MCF 10A (cell line): ENCODE measurements at regions of chr11 and their contacts with region 1.

Region 1: GRCh38 chr11:83071567-83072349 is at the start of gene RAB30:
- DNase-seq: peak; percentile 100
- H3K4me3 Mint-ChIP-seq: no peak within 1 kb of the TSS
- H3K27ac Mint-ChIP-seq: no peak within 1 kb of the TSS
- H3K4me1 Mint-ChIP-seq: peaks cover 26% of the 10 kb centered on the region
- H3K27me3 Mint-ChIP-seq: no peaks in the 10 kb centered on the region
- CTCF ChIP-seq: no peak
- total RNA-seq, gene RAB30: 12.5 and 13.2 TPM in 2 replicates

Region 2: GRCh38 chr11:82906244-82906654 is 165.5 kb before region 1 on chr11:
- CTCF ChIA-PET with region 1: interaction called, 4 read pairs
- POLR2A ChIA-PET with region 1: interaction called, 46 read pairs
- intact Hi-C with region 1: loop called (anchors 1 kb)
- DNase-seq: peak; percentile 40
- H3K4me3 Mint-ChIP-seq: peak overlapping the region; percentile 37
- H3K27ac Mint-ChIP-seq: peak overlapping the region; percentile 40
- H3K4me1 Mint-ChIP-seq: peaks cover 34% of the 10 kb centered on the region
- H3K27me3 Mint-ChIP-seq: no peaks in the 10 kb centered on the region
- CTCF ChIP-seq: peak; percentile 46

Region 3: DNA sequence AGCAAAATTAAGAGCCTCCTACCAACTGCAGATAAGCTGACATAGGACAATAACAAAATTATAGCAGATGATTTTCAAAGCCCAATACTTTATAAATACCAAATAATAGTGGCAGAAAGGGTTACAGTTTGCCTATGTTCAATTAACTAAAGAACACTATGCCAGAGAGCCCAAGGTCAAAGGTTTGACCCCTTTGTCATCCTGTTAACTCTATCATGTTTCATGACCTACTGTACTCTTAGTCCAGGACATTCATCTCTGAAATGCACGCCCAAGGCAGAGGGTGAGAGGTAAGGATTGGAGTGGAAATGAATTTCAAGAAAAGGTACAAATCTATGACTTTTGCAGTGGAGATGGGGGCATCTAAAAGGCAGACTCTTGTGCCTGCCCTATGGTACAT is 99.7 kb before region 1 on chr11:
- CTCF ChIA-PET with region 1: no interaction called
- POLR2A ChIA-PET with region 1: no interaction called
- intact Hi-C with region 1: no loop called
- DNase-seq: no peak
- H3K4me3 Mint-ChIP-seq: no peak overlapping the region
- H3K27ac Mint-ChIP-seq: no peak overlapping the region
- H3K4me1 Mint-ChIP-seq: peaks cover 11% of the 10 kb centered on the region
- H3K27me3 Mint-ChIP-seq: no peaks in the 10 kb centered on the region
- CTCF ChIP-seq: no peak

Region 4: GRCh38 chr11:83019888-83020579 is 51.7 kb before region 1 on chr11:
- CTCF ChIA-PET with region 1: interaction called, 6 read pairs
- POLR2A ChIA-PET with region 1: interaction called, 41 read pairs
- intact Hi-C with region 1: no loop called
- DNase-seq: peak; percentile 29
- H3K4me3 Mint-ChIP-seq: no peak overlapping the region
- H3K27ac Mint-ChIP-seq: peak overlapping the region; percentile 61
- H3K4me1 Mint-ChIP-seq: peaks cover 19% of the 10 kb centered on the region
- H3K27me3 Mint-ChIP-seq: no peaks in the 10 kb centered on the region
- CTCF ChIP-seq: no peak

Region 5: GRCh38 chr11:83044958-83045712 is 26.6 kb before region 1 on chr11:
- CTCF ChIA-PET with region 1: interaction called, 4 read pairs
- POLR2A ChIA-PET with region 1: interaction called, 134 read pairs
- intact Hi-C with region 1: no loop called
- DNase-seq: peak; percentile 85
- H3K4me3 Mint-ChIP-seq: no peak overlapping the region
- H3K27ac Mint-ChIP-seq: peak overlapping the region; percentile 69
- H3K4me1 Mint-ChIP-seq: peaks cover 34% of the 10 kb centered on the region
- H3K27me3 Mint-ChIP-seq: no peaks in the 10 kb centered on the region
- CTCF ChIP-seq: no peak

Region 6: GRCh38 chr11:83092488-83093384 is 21.0 kb after region 1 on chr11:
- CTCF ChIA-PET with region 1: interaction called, 6 read pairs
- POLR2A ChIA-PET with region 1: interaction called, 28 read pairs
- intact Hi-C with region 1: no loop called
- DNase-seq: peak; percentile 64
- H3K4me3 Mint-ChIP-seq: no peak overlapping the region
- H3K27ac Mint-ChIP-seq: peak overlapping the region; percentile 84
- H3K4me1 Mint-ChIP-seq: peaks cover 9% of the 10 kb centered on the region
- H3K27me3 Mint-ChIP-seq: no peaks in the 10 kb centered on the region
- CTCF ChIP-seq: no peak

Region 7: GRCh38 chr11:83120327-83120726 is 48.6 kb after region 1 on chr11:
- CTCF ChIA-PET with region 1: no interaction called
- POLR2A ChIA-PET with region 1: no interaction called
- intact Hi-C with region 1: no loop called
- DNase-seq: no peak
- H3K4me3 Mint-ChIP-seq: no peak overlapping the region
- H3K27ac Mint-ChIP-seq: no peak overlapping the region
- H3K4me1 Mint-ChIP-seq: no peaks in the 10 kb centered on the region
- H3K27me3 Mint-ChIP-seq: no peaks in the 10 kb centered on the region
- CTCF ChIP-seq: no peak

Region 8: GRCh38 chr11:83285771-83286528 is 214.2 kb after region 1 on chr11 and contains the start of gene CCDC90B:
- CTCF ChIA-PET with region 1: no interaction called
- POLR2A ChIA-PET with region 1: interaction called, 3 read pairs
- intact Hi-C with region 1: loop called (anchors 2 kb)
- DNase-seq: peak; percentile 97
- H3K4me3 Mint-ChIP-seq: peak within 1 kb of the TSS; percentile 90
- H3K27ac Mint-ChIP-seq: peak within 1 kb of the TSS; percentile 99
- H3K4me1 Mint-ChIP-seq: peaks cover 10% of the 10 kb centered on the region
- H3K27me3 Mint-ChIP-seq: no peaks in the 10 kb centered on the region
- CTCF ChIP-seq: peak; percentile 6
- total RNA-seq, gene CCDC90B: 69.1 and 72.9 TPM in 2 replicates